Sciatic nerve (tissue), 2 donors: ENCODE measurements at regions of chr1 and their contacts with region 1.

Region 1: GRCh38 chr1:173628888-173629287 is 6.2 kb upstream of the TEX50 start:
- DNase-seq: no peak
- ATAC-seq: no peak

Region 2: GRCh38 chr1:174358786-174359453 is 730.0 kb after region 1 on chr1:
- intact Hi-C with region 1: loop called (anchors 5 kb)
- DNase-seq: no peak
- ATAC-seq: no peak